Posterior vena cava (tissue), 2 donors: ENCODE measurements at regions of chr6 and their contacts with region 1.

Region 1: DNA sequence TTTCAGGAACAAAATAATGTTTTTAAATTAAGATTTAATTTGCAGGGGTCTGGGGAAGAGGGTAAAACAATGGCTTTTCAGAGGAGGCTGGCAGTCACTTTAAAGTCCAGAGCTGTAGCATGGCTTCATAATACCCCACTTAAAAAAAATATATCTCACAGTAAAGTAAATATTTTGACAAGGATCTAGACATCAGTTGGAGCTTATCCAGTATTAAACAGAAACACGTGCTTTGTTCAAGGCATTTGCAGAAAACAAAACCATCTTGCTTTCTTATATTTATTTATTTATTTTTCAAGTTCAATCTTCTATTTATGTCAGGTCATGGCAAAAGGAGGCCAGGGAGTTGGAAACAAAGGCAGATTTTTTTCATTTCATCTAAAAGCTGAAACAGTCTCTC is 53.3 kb upstream of the PRL start:
- DNase-seq: no peak

Region 2: GRCh38 chr6:21922086-21922485 is 428.0 kb before region 1 on chr6:
- intact Hi-C with region 1: no loop called
- DNase-seq: no peak

Region 3: DNA sequence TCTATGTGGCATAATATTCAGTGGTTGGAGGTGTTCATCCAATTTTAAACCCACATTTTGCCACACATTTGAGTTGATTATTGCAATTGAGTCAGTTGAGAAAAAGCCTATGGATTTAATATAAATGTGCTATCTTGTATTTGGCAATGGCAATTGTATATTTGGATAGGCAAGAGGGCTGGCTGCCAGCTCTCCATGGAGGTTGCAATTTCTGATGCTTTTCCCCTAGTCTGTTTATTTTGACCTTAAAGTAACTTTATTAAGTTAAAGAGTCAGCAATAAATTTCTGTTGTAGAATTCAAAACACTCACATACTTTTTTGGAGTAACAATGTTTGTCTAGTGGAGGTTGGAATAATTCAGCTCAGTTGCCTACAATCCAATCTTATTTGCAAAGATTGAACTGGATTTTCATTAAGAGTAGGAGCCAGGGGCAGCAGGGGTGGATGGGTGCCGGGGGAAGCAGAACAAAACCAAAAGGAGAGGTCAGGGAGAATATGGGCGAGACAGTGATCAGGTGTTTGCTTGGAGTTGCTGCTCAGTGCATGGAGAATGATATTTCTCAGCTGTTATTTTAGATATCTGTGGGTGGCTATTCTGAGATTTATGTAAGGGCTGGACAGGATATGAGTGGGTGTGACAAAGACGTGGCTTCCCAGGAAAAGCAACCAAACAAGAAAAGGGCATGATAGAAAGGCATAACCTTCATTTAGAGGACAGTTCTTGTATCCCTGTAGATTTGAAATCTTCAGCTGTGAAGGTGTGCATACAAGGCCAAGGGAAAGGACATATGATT is 382.3 kb after region 1 on chr6:
- intact Hi-C with region 1: loop called in 1 of 2 experiments (anchors 5 kb)
- DNase-seq: no peak